Naive thymus-derived CD4-positive, alpha-beta T cell (primary cell): ENCODE measurements at regions of chrX and their contacts with region 1.

Region 1: DNA sequence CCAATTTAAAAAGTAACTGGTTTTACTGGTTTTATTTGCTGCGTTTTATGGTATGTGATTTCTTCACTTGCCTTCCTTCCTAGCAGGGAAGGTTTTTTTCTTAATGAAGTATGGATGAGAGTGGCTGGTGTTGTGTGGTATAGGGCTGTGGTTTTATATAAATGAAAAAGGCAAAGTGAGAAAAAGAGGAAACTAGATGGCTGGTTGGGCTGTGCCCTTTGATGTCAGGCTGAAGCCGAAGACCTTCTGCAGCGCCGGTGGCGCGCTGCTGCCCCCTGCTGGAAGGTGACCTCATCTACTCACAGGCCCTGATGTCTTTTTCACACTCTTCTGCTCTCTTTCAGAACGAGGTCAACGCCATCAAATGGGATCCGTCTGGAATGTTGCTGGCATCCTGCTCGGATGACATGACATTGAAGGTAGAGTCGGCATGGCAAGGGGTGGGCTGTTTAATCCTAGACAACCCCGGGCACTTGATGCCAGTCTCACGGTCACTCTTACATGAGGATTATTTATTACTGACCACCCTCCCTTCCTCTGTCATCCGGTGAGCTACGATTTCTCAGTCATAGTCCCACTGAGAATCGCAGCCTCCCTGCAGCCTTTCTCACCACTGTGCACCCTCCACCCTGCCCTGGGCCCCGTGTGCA is 56.6 kb downstream of the GPR143 start:
- DNase-seq: peak; percentile 62 to 84 (median 76)
- ATAC-seq: peak; percentile 95
- H3K4me3 ChIP-seq: no peak overlapping the region
- H3K4me3 Mint-ChIP-seq: peak overlapping the region in 4 of 10 donors; percentile 1 to 42 (median 16)
- H3K27ac ChIP-seq: no peak overlapping the region
- H3K27ac Mint-ChIP-seq: peak overlapping the region in 7 of 9 donors; percentile 7 to 84 (median 49)
- H3K4me1 ChIP-seq: peaks cover 0 to 5% of the 10 kb centered on the region in 2 donors
- H3K4me1 Mint-ChIP-seq: peaks cover 0 to 16% (median 10%) of the 10 kb centered on the region in 7 donors
- H3K27me3 ChIP-seq: no peaks in the 10 kb centered on the region
- H3K27me3 Mint-ChIP-seq: no peaks in the 10 kb centered on the region

Region 2: GRCh38 chrX:8743126-8743732 is 965.8 kb before region 1 on chrX:
- CTCF ChIA-PET with region 1: interaction called, 3 read pairs
- POLR2A ChIA-PET with region 1: no interaction called
- intact Hi-C with region 1: loop called in 1 of 2 experiments (anchors 1 kb)
- DNase-seq: peak; percentile 23 to 68 (median 43)
- ATAC-seq: no peak
- H3K4me3 ChIP-seq: no peak overlapping the region
- H3K4me3 Mint-ChIP-seq: no peak overlapping the region
- H3K27ac ChIP-seq: no peak overlapping the region
- H3K27ac Mint-ChIP-seq: no peak overlapping the region
- H3K4me1 ChIP-seq: no peaks in the 10 kb centered on the region
- H3K4me1 Mint-ChIP-seq: no peaks in the 10 kb centered on the region
- H3K27me3 ChIP-seq: no peaks in the 10 kb centered on the region
- H3K27me3 Mint-ChIP-seq: peaks cover 0 to 6% (median 4%) of the 10 kb centered on the region in 5 donors

Region 3: GRCh38 chrX:8748855-8749254 is 960.2 kb before region 1 on chrX:
- CTCF ChIA-PET with region 1: interaction called, 3 read pairs
- POLR2A ChIA-PET with region 1: no interaction called
- intact Hi-C with region 1: loop called (anchors 1 kb)
- DNase-seq: peak in 4 of 9 donors; percentile 14 to 30 (median 24)
- ATAC-seq: no peak
- H3K4me3 ChIP-seq: no peak overlapping the region
- H3K4me3 Mint-ChIP-seq: no peak overlapping the region
- H3K27ac ChIP-seq: no peak overlapping the region
- H3K27ac Mint-ChIP-seq: no peak overlapping the region
- H3K4me1 ChIP-seq: no peaks in the 10 kb centered on the region
- H3K4me1 Mint-ChIP-seq: peaks cover 0 to 6% (median 0%) of the 10 kb centered on the region in 7 donors
- H3K27me3 ChIP-seq: no peaks in the 10 kb centered on the region
- H3K27me3 Mint-ChIP-seq: peaks cover 4 to 12% (median 6%) of the 10 kb centered on the region in 5 donors

Region 4: GRCh38 chrX:8815464-8816065 is 893.5 kb before region 1 on chrX:
- CTCF ChIA-PET with region 1: no interaction called
- POLR2A ChIA-PET with region 1: no interaction called
- intact Hi-C with region 1: loop called (anchors 1 to 2 kb)
- DNase-seq: peak in 6 of 9 donors; percentile 7 to 44 (median 28)
- ATAC-seq: no peak
- H3K4me3 ChIP-seq: no peak overlapping the region
- H3K4me3 Mint-ChIP-seq: no peak overlapping the region
- H3K27ac ChIP-seq: no peak overlapping the region
- H3K27ac Mint-ChIP-seq: no peak overlapping the region
- H3K4me1 ChIP-seq: no peaks in the 10 kb centered on the region
- H3K4me1 Mint-ChIP-seq: no peaks in the 10 kb centered on the region
- H3K27me3 ChIP-seq: no peaks in the 10 kb centered on the region
- H3K27me3 Mint-ChIP-seq: peaks cover 0 to 9% (median 0%) of the 10 kb centered on the region in 5 donors

Region 5: DNA sequence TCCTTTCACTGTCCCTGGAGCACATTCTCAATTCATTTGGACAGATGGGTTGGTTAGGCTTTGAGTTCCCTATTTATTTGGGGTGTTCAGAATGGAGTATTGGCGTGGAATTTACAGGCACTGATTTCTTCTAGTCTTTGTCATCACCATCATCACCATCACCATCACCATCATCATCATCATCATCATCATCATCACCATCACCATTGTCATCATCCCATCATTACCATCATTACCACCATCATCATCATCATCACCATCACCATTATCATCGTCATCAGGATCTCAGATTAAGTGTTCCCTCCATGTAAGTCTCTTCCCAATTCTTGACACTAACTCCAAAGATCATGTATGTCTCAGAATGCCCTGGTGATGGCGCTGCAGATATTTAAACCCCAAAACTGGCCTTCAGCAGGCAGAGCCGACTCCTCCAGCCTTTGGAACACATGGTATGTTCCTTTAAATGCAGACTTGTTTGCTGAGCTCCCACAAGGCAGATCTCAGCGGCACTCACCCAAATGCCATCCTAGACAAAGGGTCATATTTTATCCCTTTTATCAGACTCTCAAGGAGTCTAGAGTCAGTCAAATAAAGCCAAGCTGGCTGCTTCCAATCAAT is 888.0 kb before region 1 on chrX:
- CTCF ChIA-PET with region 1: no interaction called
- POLR2A ChIA-PET with region 1: no interaction called
- intact Hi-C with region 1: loop called (anchors 1 to 2 kb)
- DNase-seq: no peak
- ATAC-seq: no peak
- H3K4me3 ChIP-seq: no peak overlapping the region
- H3K4me3 Mint-ChIP-seq: no peak overlapping the region
- H3K27ac ChIP-seq: no peak overlapping the region
- H3K27ac Mint-ChIP-seq: peak overlapping the region in 1 of 9 donors; percentile 12
- H3K4me1 ChIP-seq: no peaks in the 10 kb centered on the region
- H3K4me1 Mint-ChIP-seq: no peaks in the 10 kb centered on the region
- H3K27me3 ChIP-seq: no peaks in the 10 kb centered on the region
- H3K27me3 Mint-ChIP-seq: peaks cover 0 to 13% (median 8%) of the 10 kb centered on the region in 5 donors

Region 6: GRCh38 chrX:8971116-8971515 is 737.9 kb before region 1 on chrX:
- CTCF ChIA-PET with region 1: no interaction called
- POLR2A ChIA-PET with region 1: no interaction called
- intact Hi-C with region 1: loop called (anchors 1 kb)
- DNase-seq: peak in 7 of 9 donors; percentile 18 to 59 (median 41)
- ATAC-seq: peak; percentile 49
- H3K4me3 ChIP-seq: no peak overlapping the region
- H3K4me3 Mint-ChIP-seq: no peak overlapping the region
- H3K27ac ChIP-seq: no peak overlapping the region
- H3K27ac Mint-ChIP-seq: peak overlapping the region in 3 of 9 donors; percentile 33 to 72 (median 33)
- H3K4me1 ChIP-seq: no peaks in the 10 kb centered on the region
- H3K4me1 Mint-ChIP-seq: peaks cover 0 to 2% (median 0%) of the 10 kb centered on the region in 7 donors
- H3K27me3 ChIP-seq: no peaks in the 10 kb centered on the region
- H3K27me3 Mint-ChIP-seq: no peaks in the 10 kb centered on the region

Region 7: DNA sequence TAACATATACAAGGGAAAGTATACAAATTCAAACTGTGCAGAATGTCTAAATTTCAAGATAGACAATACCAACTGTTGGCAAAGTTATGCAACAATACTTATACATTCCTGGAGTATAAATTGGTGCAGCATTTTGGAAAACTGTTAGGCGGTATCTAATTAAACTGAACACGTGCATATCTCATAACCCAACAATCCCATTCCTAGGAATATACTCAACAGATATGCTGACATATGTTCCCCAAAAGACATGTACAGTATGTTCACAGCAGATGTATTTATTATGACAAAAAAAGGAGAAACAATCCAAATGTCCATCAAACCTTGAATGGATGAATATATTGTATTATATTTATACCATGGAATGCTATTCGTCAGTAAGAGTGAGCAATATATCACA is 658.7 kb before region 1 on chrX:
- CTCF ChIA-PET with region 1: no interaction called
- POLR2A ChIA-PET with region 1: no interaction called
- intact Hi-C with region 1: loop called in 1 of 2 experiments (anchors 5 kb)
- DNase-seq: no peak
- ATAC-seq: no peak
- H3K4me3 ChIP-seq: no peak overlapping the region
- H3K4me3 Mint-ChIP-seq: no peak overlapping the region
- H3K27ac ChIP-seq: no peak overlapping the region
- H3K27ac Mint-ChIP-seq: no peak overlapping the region
- H3K4me1 ChIP-seq: no peaks in the 10 kb centered on the region
- H3K4me1 Mint-ChIP-seq: no peaks in the 10 kb centered on the region
- H3K27me3 ChIP-seq: no peaks in the 10 kb centered on the region
- H3K27me3 Mint-ChIP-seq: no peaks in the 10 kb centered on the region

Region 8: DNA sequence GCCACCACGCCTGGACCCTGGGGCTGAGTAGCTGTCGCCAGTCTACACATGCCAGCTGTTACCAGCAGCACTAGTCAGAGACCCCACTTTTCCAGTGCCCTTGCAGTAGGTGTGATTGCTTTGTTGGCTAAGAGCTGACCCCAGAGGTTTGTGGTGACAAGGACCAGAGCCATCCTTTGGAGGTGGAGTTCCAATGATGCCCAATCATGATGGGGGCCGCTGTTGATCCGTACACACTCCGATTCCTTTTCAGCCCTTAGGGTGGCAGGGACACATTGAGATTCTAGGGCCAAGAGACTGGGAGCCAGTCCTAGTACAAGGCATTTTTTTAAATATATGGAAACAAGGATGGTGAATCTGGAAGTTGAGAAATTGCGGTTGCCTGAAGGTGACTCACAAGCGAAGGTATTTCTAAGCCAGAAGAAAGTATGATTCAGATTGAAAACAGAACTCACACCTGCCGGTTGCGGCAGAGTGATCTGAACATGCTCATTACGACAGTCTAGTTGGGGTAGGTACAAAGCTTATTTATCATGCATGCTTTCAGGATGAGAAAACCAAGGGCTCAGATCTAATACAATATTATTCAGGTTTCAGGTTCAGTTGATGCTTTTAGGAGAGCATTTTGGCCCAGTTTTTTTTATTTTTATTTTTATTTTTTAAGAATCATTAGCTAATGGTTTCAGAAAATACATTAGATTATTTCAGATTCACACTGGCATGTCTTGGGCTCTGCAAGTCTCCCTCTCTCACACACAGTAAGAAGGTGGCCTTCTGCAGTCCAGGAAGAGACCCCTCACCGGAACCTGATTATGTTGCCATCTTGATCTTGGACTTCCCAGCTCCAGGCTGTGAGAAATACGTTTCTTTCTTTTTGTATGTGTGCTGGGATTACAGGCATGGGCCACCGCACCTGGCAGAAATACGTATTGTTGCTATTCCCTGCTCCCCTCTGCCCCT is 120.6 kb after region 1 on chrX:
- CTCF ChIA-PET with region 1: no interaction called
- POLR2A ChIA-PET with region 1: no interaction called
- intact Hi-C with region 1: no loop called
- DNase-seq: peak in 1 of 9 donors; percentile 21
- ATAC-seq: no peak
- H3K4me3 ChIP-seq: no peak overlapping the region
- H3K4me3 Mint-ChIP-seq: no peak overlapping the region
- H3K27ac ChIP-seq: no peak overlapping the region
- H3K27ac Mint-ChIP-seq: no peak overlapping the region
- H3K4me1 ChIP-seq: no peaks in the 10 kb centered on the region
- H3K4me1 Mint-ChIP-seq: peaks cover 0 to 3% (median 0%) of the 10 kb centered on the region in 7 donors
- H3K27me3 ChIP-seq: no peaks in the 10 kb centered on the region
- H3K27me3 Mint-ChIP-seq: peaks cover 0 to 8% (median 0%) of the 10 kb centered on the region in 5 donors